ENCODE measurements at regions of chr18 and their contacts with region 1.

Region 1: DNA sequence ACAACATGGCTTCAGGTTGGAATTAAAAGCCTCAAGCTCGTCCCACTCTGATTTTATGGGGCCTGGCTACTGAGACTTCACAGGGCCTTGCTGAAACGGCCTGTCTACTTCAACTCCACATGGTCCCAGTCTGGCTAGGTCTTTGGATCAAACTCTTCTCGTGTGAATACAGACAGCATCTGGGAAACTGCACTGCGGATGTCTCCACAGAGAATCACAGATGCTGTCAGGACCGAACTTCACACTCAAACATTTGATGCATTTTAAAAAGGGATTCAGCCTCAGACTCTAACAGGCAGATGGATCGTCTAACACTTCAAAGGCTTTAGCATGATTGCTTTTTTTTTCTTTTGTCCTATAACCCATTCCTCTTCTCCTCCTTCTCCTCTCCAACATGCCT is 198.5 kb downstream of the ZNF521 start:
- DNase-seq: no peak
- H3K4me3 Mint-ChIP-seq: no peak overlapping the region
- H3K27ac Mint-ChIP-seq: no peak overlapping the region
- H3K4me1 Mint-ChIP-seq: no peaks in the 10 kb centered on the region
- H3K27me3 Mint-ChIP-seq: no peaks in the 10 kb centered on the region

Region 2: GRCh38 chr18:25099895-25100294 is 53.5 kb before region 1 on chr18:
- intact Hi-C with region 1: loop called (anchors 10 kb)
- DNase-seq: no peak
- H3K4me3 Mint-ChIP-seq: no peak overlapping the region
- H3K27ac Mint-ChIP-seq: no peak overlapping the region
- H3K4me1 Mint-ChIP-seq: no peaks in the 10 kb centered on the region
- H3K27me3 Mint-ChIP-seq: no peaks in the 10 kb centered on the region

Region 3: DNA sequence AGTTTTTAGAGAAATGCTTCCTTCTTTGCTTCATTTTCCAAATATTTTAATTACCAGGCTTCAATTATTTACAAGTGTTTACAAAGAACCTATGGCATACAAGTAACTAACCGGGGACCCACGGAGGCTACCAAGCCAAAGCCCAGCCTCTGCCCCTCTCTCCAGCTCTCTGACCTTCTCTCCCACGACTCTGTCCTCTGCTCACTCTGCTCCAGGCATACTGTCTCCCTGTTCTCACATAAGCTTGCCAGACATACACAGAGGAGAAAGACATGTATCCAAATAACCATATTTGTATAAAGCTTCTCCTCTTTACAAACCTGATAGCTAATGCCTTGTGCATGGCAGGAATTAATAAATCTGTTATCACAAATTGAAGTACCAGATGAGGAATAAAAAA is 57.2 kb after region 1 on chr18:
- intact Hi-C with region 1: no loop called
- DNase-seq: no peak
- H3K4me3 Mint-ChIP-seq: no peak overlapping the region
- H3K27ac Mint-ChIP-seq: no peak overlapping the region
- H3K4me1 Mint-ChIP-seq: no peaks in the 10 kb centered on the region
- H3K27me3 Mint-ChIP-seq: no peaks in the 10 kb centered on the region

Measured in activated CD4-positive, alpha-beta T cell treated with anti-CD3 and anti-CD28 coated beads, Interleukin-2, amount 10 ng/mL, durations not matched to agents 24 days and 14 days (primary cell).